PC-3 (cell line): ENCODE measurements at regions of chr12 and their contacts with region 1.

Region 1: DNA sequence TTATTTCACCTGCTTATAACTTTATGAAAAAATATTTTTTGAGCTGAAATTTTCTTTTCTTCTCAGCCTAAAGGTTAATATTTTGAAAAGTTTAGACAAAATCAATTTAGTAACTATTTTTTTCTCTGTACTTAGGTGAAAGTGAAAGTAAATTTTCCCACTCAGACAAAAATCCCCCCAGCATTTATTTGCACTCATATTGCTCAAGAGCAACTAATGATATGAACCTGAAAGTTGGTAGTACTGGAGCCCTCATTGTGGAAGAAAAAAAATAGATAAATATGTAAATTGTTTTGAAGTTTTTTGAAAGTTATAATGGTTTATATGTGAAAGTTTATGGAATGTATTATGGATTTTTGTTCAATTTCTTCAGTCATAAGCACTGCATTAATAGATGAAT is 1005.9 kb upstream of the ATXN7L3B start:
- DNase-seq: no peak
- ATAC-seq: no peak
- H3K4me3 ChIP-seq: no peak overlapping the region
- H3K27ac ChIP-seq: no peak overlapping the region
- H3K4me1 ChIP-seq: no peaks in the 10 kb centered on the region
- H3K27me3 ChIP-seq: no peaks in the 10 kb centered on the region
- CTCF ChIP-seq: no peak

Region 2: DNA sequence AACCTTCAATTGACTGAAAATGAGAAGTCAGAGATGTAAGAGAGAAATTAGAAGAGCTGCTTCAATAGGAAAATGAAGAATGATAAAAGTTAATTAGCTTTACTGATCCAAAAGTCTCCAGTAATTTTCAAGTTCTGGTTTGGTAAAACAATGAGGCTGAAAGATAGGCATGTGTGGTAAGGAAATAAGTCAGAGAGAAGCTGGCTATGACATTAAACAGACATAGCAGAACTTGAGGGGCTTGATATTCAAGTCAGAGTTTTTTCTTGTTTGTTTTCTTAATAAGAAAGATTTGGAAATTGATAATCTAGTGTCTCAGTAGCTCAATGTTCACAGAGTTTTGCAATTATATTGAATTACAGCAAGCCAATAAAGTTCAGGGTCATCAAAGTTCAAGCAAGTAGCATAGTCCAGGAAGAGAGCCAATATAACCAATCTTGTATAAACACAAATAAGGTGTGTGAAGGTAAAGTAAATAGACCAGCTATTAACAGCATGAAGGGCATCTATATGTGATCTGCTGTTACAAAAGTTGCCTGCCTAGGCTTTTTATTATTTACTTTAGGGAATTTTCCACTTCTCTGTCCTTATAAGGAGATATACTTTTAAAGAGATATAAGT is 148.1 kb before region 1 on chr12:
- CTCF ChIA-PET with region 1: no interaction called
- POLR2A ChIA-PET with region 1: no interaction called
- intact Hi-C with region 1: loop called (anchors 5 kb)
- DNase-seq: peak; percentile 81
- ATAC-seq: peak; percentile 93
- H3K4me3 ChIP-seq: no peak overlapping the region
- H3K27ac ChIP-seq: peak overlapping the region; percentile 11; the same call in 1 of the 2 replicates
- H3K4me1 ChIP-seq: peaks cover 17% of the 10 kb centered on the region
- H3K27me3 ChIP-seq: no peaks in the 10 kb centered on the region
- CTCF ChIP-seq: no peak